ENCODE measurements at regions of chr9 and their contacts with region 1.

Region 1: GRCh38 chr9:137423004-137423874 is at the starts of genes EXD3 and NOXA1:
- DNase-seq: peak; percentile 100
- H3K4me3 ChIP-seq: peak within 1 kb of the TSS; percentile 81 to 86
- H3K27ac ChIP-seq: peak within 1 kb of the TSS in 1 of 2 experiments; percentile 31; a peak in 1 of 4 replicates
- H3K4me1 ChIP-seq: peaks cover 0 to 21% of the 10 kb centered on the region in 2 experiments; a peak in 2 of 4 replicates
- H3K27me3 ChIP-seq: no peaks in the 10 kb centered on the region
- CTCF ChIP-seq: peak; percentile 58
- EP300 ChIP-seq: no peak
- RAD21 ChIP-seq: peak; percentile 49
- polyA plus RNA-seq, gene EXD3: 11.5 and 14.2 TPM in 2 replicates
- polyA plus RNA-seq, gene NOXA1: 0.39 and 0.67 TPM in 2 replicates

Region 2: DNA sequence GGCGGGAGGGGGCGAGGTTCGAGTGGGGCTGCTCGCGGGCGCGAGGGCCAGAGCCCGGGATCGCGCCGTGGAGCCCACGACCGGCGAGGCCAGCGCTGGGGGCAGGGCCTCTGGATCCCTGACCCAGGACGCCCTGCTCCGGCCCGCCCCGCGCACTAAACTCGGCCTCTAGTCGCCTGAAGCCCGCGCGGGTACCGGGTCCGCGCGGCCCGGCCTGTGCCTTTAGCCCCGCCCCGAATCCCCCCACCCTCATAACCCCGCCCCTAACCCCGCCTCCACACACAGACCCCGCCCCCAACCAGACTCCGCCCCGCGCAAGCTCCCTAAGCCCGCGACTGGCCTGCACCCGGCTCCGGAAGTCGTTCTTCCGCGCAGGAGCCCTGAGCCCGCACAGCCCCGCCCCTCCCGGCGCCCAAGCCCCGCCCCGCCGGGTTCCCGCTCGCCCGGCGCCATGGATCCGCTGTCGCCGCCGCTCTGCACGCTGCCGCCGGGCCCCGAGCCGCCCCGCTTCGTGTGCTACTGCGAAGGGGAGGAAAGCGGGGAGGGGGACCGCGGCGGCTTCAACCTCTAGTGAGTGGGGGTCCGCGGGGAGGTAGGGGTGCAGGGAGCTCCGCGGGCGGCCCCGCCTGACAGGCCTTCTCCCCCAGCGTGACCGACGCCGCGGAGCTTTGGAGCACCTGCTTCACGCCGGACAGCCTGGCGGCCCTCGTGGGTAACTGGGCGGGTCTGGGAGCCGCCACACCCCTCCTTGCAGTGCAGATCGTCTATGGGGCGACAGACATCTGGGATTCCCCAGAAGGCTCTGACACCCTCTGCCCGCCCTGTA is 431.0 kb before region 1 on chr9 and contains the start of gene PAXX:
- CTCF ChIA-PET with region 1: no interaction called
- POLR2A ChIA-PET with region 1: no interaction called
- DNase-seq: peak; percentile 100
- H3K4me3 ChIP-seq: peak within 1 kb of the TSS; percentile 80 to 85
- H3K27ac ChIP-seq: peak within 1 kb of the TSS in 1 of 2 experiments; percentile 56; a peak in 2 of 4 replicates
- H3K4me1 ChIP-seq: peaks cover 9 to 24% of the 10 kb centered on the region in 2 experiments; a peak in 3 of 4 replicates
- H3K27me3 ChIP-seq: no peaks in the 10 kb centered on the region
- CTCF ChIP-seq: no peak
- EP300 ChIP-seq: no peak
- RAD21 ChIP-seq: no peak
- polyA plus RNA-seq, gene PAXX: 37.8 and 52.9 TPM in 2 replicates

Region 3: GRCh38 chr9:137302176-137302994 is 120.9 kb before region 1 on chr9 and contains the start of gene NRARP:
- CTCF ChIA-PET with region 1: interaction called, 25 read pairs
- POLR2A ChIA-PET with region 1: interaction called, 5 read pairs
- DNase-seq: peak; percentile 98
- H3K4me3 ChIP-seq: peak within 1 kb of the TSS; percentile 51 to 65
- H3K27ac ChIP-seq: peak within 1 kb of the TSS in 1 of 2 experiments; percentile 71; a peak in 2 of 4 replicates
- H3K4me1 ChIP-seq: peaks cover 0 to 21% of the 10 kb centered on the region in 2 experiments; a peak in 2 of 4 replicates
- H3K27me3 ChIP-seq: no peaks in the 10 kb centered on the region
- CTCF ChIP-seq: peak; percentile 58
- EP300 ChIP-seq: no peak
- RAD21 ChIP-seq: 0 out of 2 replicates have a peak, but pooled peaks have one; percentile 22
- polyA plus RNA-seq, gene NRARP: 3.9 and 4.2 TPM in 2 replicates

Region 4: DNA sequence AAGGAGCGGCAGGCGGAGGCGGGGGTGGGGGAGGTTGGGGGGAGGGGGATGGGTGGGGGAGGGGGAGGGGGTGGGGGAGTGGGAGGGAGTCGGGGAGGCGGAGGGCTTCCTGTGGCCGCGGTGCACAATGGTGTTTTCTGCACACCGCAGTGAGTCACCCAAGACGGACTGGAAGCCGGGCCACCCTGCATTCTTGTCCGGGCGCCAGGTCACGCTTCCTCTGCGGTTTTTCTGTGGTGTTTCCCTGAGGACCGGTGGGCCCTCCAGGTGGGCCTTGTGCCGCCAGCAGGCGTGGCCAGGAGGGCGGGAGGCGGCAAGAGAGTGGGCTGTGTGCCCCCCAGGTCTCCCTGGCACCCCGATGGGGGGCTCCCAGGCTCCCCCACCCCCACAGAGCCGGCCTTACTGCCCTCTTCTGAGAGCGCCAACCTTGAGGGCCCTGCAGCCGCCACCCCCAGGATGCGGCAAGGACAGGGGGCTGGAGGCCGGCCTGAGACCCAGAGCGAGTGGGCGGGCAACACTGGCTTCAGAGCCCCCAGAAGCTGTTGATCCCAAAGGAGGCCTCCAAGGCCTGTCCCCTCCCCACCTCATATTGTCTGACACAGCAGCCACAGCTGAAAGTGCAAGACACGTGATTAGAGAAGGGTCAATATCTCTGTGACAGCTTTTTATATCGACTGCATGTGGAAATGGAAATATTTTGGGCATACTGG is 11.4 kb before region 1 on chr9:
- CTCF ChIA-PET with region 1: interaction called, 13 read pairs
- POLR2A ChIA-PET with region 1: interaction called, 3 read pairs
- DNase-seq: no peak
- H3K4me3 ChIP-seq: no peak overlapping the region
- H3K27ac ChIP-seq: peak overlapping the region in 1 of 2 experiments; percentile 54; a peak in 1 of 4 replicates
- H3K4me1 ChIP-seq: peaks cover 3 to 19% of the 10 kb centered on the region in 2 experiments; a peak in 3 of 4 replicates
- H3K27me3 ChIP-seq: no peaks in the 10 kb centered on the region
- CTCF ChIP-seq: no peak
- EP300 ChIP-seq: peak in 1 of 2 experiments; percentile 16; a peak in 1 of 4 replicates
- RAD21 ChIP-seq: no peak

Region 5: GRCh38 chr9:137445275-137445807 is 22.1 kb after region 1 on chr9:
- CTCF ChIA-PET with region 1: interaction called, 25 read pairs
- POLR2A ChIA-PET with region 1: interaction called, 3 read pairs
- DNase-seq: peak; percentile 83
- H3K4me3 ChIP-seq: peak overlapping the region in 1 of 2 experiments; percentile 35; a peak in 1 of 4 replicates
- H3K27ac ChIP-seq: no peak overlapping the region
- H3K4me1 ChIP-seq: peaks cover 0 to 10% of the 10 kb centered on the region in 2 experiments; a peak in 2 of 4 replicates
- H3K27me3 ChIP-seq: peaks cover 4% of the 10 kb centered on the region; the same call in 1 of the 2 replicates
- CTCF ChIP-seq: peak; percentile 89
- EP300 ChIP-seq: no peak
- RAD21 ChIP-seq: peak; percentile 72

Region 6: GRCh38 chr9:137453643-137454081 is 30.4 kb after region 1 on chr9:
- CTCF ChIA-PET with region 1: interaction called, 12 read pairs
- POLR2A ChIA-PET with region 1: interaction called, 3 read pairs
- DNase-seq: peak; percentile 93
- H3K4me3 ChIP-seq: no peak overlapping the region
- H3K27ac ChIP-seq: no peak overlapping the region; a peak in 1 of 4 replicates
- H3K4me1 ChIP-seq: peaks cover 14 to 46% of the 10 kb centered on the region in 2 experiments
- H3K27me3 ChIP-seq: no peaks in the 10 kb centered on the region
- CTCF ChIP-seq: no peak
- EP300 ChIP-seq: no peak
- RAD21 ChIP-seq: no peak

Measured in SK-N-SH (cell line).